Activated naive CD4-positive, alpha-beta T cell treated with anti-CD3 and anti-CD28 coated beads for 36 hours (primary cell): ENCODE measurements at regions of chr17 and their contacts with region 1.

Region 1: DNA sequence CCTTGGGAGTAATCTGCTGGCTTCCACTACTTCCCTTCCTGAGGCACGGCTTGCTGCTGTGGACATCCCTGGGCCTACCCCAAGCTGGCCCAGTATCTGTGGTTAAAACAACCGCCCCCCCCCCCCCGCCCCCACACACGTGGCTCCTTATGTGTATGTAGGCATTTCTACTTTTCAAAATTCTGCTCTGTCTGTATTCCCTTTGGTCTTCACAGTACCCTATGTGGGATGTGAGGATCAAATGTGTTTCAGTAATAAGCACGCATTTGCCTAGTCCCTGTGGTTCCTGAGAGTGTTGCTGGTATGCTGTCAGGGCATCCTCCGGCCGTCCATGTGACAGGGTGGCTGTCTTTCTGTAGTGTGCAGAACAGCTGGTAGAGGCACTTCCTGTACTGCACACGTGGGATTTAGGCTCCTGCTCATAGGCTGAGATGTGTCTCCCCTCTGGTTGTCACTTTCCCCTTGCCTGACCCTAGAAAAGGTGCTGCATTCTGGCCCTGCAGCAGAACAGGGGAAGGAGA is 2.2 kb downstream of the NT5M start:
- DNase-seq: peak; percentile 68
- H3K4me3 Mint-ChIP-seq: peak overlapping the region; percentile 61
- H3K27ac Mint-ChIP-seq: peak overlapping the region; percentile 37
- H3K4me1 Mint-ChIP-seq: peaks cover 28% of the 10 kb centered on the region
- H3K27me3 Mint-ChIP-seq: no peaks in the 10 kb centered on the region

Region 2: GRCh38 chr17:17280613-17281549 is 24.5 kb before region 1 on chr17 and contains the start of gene COPS3:
- CTCF ChIA-PET with region 1: interaction called, 5 read pairs
- intact Hi-C with region 1: loop called (anchors 1 kb)
- DNase-seq: peak; percentile 99
- H3K4me3 Mint-ChIP-seq: peak within 1 kb of the TSS; percentile 94
- H3K27ac Mint-ChIP-seq: peak within 1 kb of the TSS; percentile 88
- H3K4me1 Mint-ChIP-seq: peaks cover 39% of the 10 kb centered on the region
- H3K27me3 Mint-ChIP-seq: no peaks in the 10 kb centered on the region
- total RNA-seq, gene COPS3: 103 to 104 TPM

Region 3: GRCh38 chr17:17387830-17388441 is 82.6 kb after region 1 on chr17:
- CTCF ChIA-PET with region 1: no interaction called
- intact Hi-C with region 1: no loop called
- DNase-seq: no peak
- H3K4me3 Mint-ChIP-seq: no peak overlapping the region
- H3K27ac Mint-ChIP-seq: no peak overlapping the region
- H3K4me1 Mint-ChIP-seq: peaks cover 13% of the 10 kb centered on the region
- H3K27me3 Mint-ChIP-seq: no peaks in the 10 kb centered on the region